Calu3 (cell line): ENCODE measurements at regions of chrX and their contacts with region 1.

Region 1: GRCh38 chrX:71178908-71179307 is 34.3 kb downstream of the NLGN3 start:
- DNase-seq: peak; percentile 53
- H3K4me3 Mint-ChIP-seq: no peak overlapping the region
- H3K27ac Mint-ChIP-seq: no peak overlapping the region
- H3K4me1 Mint-ChIP-seq: no peaks in the 10 kb centered on the region
- H3K27me3 Mint-ChIP-seq: peaks cover 10% of the 10 kb centered on the region
- CTCF ChIP-seq: peak; percentile 55

Region 2: GRCh38 chrX:70694339-70695122 is 484.4 kb before region 1 on chrX:
- CTCF ChIA-PET with region 1: no interaction called
- intact Hi-C with region 1: no loop called
- DNase-seq: no peak
- H3K4me3 Mint-ChIP-seq: no peak overlapping the region
- H3K27ac Mint-ChIP-seq: no peak overlapping the region
- H3K4me1 Mint-ChIP-seq: no peaks in the 10 kb centered on the region
- H3K27me3 Mint-ChIP-seq: no peaks in the 10 kb centered on the region
- CTCF ChIP-seq: no peak

Region 3: GRCh38 chrX:70769659-70770232 is 409.2 kb before region 1 on chrX:
- CTCF ChIA-PET with region 1: interaction called, 3 read pairs
- intact Hi-C with region 1: loop called (anchors 10 kb)
- DNase-seq: no peak
- H3K4me3 Mint-ChIP-seq: no peak overlapping the region
- H3K27ac Mint-ChIP-seq: no peak overlapping the region
- H3K4me1 Mint-ChIP-seq: no peaks in the 10 kb centered on the region
- H3K27me3 Mint-ChIP-seq: peaks cover 13% of the 10 kb centered on the region
- CTCF ChIP-seq: no peak

Region 4: GRCh38 chrX:70970482-70970995 is 208.4 kb before region 1 on chrX:
- CTCF ChIA-PET with region 1: no interaction called
- intact Hi-C with region 1: loop called (anchors 1 kb)
- DNase-seq: no peak
- H3K4me3 Mint-ChIP-seq: no peak overlapping the region
- H3K27ac Mint-ChIP-seq: no peak overlapping the region
- H3K4me1 Mint-ChIP-seq: no peaks in the 10 kb centered on the region
- H3K27me3 Mint-ChIP-seq: peaks cover 30% of the 10 kb centered on the region
- CTCF ChIP-seq: no peak

Region 5: GRCh38 chrX:70998411-70999027 is 180.4 kb before region 1 on chrX:
- CTCF ChIA-PET with region 1: no interaction called
- intact Hi-C with region 1: loop called (anchors 2 kb)
- DNase-seq: peak; percentile 26
- H3K4me3 Mint-ChIP-seq: no peak overlapping the region
- H3K27ac Mint-ChIP-seq: no peak overlapping the region
- H3K4me1 Mint-ChIP-seq: peaks cover 7% of the 10 kb centered on the region
- H3K27me3 Mint-ChIP-seq: peaks cover 41% of the 10 kb centered on the region
- CTCF ChIP-seq: no peak

Region 6: DNA sequence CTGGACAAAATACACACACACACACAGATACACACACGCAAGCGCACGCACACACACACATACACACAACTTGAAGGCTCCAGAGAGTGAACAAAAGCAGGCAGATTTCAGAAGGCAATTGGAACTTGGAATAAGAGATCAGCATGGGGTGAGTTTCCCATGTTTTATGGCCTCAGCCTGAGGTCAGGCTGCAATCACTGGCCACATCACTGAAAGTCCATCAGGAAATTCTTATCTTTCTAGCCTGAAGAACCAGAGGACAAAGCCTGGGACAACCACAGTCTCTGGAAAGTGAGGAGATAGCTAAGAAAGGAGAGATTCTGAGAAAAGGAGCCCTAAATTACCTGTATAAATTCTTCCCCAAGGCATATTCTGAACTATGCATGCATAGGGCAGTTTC is 102.4 kb before region 1 on chrX:
- CTCF ChIA-PET with region 1: no interaction called
- intact Hi-C with region 1: no loop called
- DNase-seq: no peak
- H3K4me3 Mint-ChIP-seq: no peak overlapping the region
- H3K27ac Mint-ChIP-seq: no peak overlapping the region
- H3K4me1 Mint-ChIP-seq: peaks cover 13% of the 10 kb centered on the region
- H3K27me3 Mint-ChIP-seq: peaks cover 65% of the 10 kb centered on the region
- CTCF ChIP-seq: no peak

Region 7: DNA sequence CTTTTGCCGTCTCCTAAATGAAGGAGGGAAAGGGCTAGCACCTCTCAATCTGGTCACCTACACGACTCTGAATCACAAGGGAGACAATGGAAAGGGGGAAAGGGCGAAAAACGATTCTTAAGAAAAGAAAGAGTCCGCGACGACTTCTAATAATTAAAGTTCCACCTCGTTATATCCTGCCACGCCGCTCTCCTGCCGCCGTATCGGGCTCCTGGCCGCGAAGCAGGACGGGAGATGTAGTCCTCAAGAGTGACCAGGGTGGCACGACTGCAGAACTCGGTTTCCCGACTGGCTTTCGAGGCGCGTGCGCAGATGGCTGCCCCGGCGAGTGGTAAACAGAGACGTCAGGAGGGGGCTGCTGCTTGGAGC is 83.4 kb before region 1 on chrX and contains the start of gene FOXO4:
- CTCF ChIA-PET with region 1: no interaction called
- intact Hi-C with region 1: loop called (anchors 5 kb)
- DNase-seq: peak; percentile 87
- H3K4me3 Mint-ChIP-seq: peak within 1 kb of the TSS; percentile 92
- H3K27ac Mint-ChIP-seq: peak within 1 kb of the TSS; percentile 77
- H3K4me1 Mint-ChIP-seq: no peaks in the 10 kb centered on the region
- H3K27me3 Mint-ChIP-seq: no peaks in the 10 kb centered on the region
- CTCF ChIP-seq: no peak
- total RNA-seq, gene FOXO4: 7.8 and 9.8 TPM in 2 replicates

Region 8: GRCh38 chrX:71198066-71198465 is 19.2 kb after region 1 on chrX:
- CTCF ChIA-PET with region 1: no interaction called
- intact Hi-C with region 1: no loop called
- DNase-seq: no peak
- H3K4me3 Mint-ChIP-seq: no peak overlapping the region
- H3K27ac Mint-ChIP-seq: no peak overlapping the region
- H3K4me1 Mint-ChIP-seq: peaks cover 24% of the 10 kb centered on the region
- H3K27me3 Mint-ChIP-seq: no peaks in the 10 kb centered on the region
- CTCF ChIP-seq: no peak